PC-9 (cell line): ENCODE measurements at regions of chr5 and their contacts with region 1.

Region 1: GRCh38 chr5:72611118-72611730 is 104.0 kb upstream of the ZNF366 start:
- DNase-seq: peak in 1 of 2 experiments; percentile 56
- H3K4me3 ChIP-seq: no peak overlapping the region
- H3K27ac ChIP-seq: no peak overlapping the region
- H3K4me1 ChIP-seq: no peaks in the 10 kb centered on the region
- H3K27me3 ChIP-seq: no peaks in the 10 kb centered on the region
- CTCF ChIP-seq: peak; percentile 90

Region 2: DNA sequence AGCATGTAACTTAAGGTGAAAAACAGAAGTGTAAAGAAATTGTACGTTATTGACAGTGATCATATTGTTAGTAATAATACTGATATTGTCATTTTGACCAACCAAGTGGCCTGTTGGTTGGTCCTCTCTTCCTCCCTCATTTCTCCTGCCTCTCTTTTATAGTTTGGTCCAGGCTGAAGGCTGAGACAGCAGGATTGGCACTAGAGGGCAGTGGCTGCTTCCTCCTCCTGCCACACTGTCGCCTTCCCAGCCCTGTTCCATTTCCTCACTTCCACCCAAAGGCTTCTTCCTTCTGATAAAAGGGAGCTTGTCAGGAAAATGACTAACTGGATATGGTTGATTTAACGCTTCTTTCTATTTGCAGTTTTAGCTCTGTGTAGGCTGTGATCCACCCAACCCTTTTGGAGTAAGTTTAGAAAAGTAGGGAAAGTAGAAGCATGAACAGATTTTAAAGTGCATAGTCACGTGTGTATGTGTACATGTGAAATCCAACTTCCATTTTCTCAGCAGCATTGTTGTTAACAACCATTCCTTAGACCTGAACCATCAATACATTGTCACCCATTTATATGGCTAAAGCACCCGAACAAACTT is 255.4 kb before region 1 on chr5:
- CTCF ChIA-PET with region 1: no interaction called
- POLR2A ChIA-PET with region 1: no interaction called
- intact Hi-C with region 1: no loop called
- DNase-seq: no peak
- H3K4me3 ChIP-seq: no peak overlapping the region
- H3K27ac ChIP-seq: no peak overlapping the region
- H3K4me1 ChIP-seq: no peaks in the 10 kb centered on the region
- H3K27me3 ChIP-seq: no peaks in the 10 kb centered on the region
- CTCF ChIP-seq: peak; percentile 50

Region 3: DNA sequence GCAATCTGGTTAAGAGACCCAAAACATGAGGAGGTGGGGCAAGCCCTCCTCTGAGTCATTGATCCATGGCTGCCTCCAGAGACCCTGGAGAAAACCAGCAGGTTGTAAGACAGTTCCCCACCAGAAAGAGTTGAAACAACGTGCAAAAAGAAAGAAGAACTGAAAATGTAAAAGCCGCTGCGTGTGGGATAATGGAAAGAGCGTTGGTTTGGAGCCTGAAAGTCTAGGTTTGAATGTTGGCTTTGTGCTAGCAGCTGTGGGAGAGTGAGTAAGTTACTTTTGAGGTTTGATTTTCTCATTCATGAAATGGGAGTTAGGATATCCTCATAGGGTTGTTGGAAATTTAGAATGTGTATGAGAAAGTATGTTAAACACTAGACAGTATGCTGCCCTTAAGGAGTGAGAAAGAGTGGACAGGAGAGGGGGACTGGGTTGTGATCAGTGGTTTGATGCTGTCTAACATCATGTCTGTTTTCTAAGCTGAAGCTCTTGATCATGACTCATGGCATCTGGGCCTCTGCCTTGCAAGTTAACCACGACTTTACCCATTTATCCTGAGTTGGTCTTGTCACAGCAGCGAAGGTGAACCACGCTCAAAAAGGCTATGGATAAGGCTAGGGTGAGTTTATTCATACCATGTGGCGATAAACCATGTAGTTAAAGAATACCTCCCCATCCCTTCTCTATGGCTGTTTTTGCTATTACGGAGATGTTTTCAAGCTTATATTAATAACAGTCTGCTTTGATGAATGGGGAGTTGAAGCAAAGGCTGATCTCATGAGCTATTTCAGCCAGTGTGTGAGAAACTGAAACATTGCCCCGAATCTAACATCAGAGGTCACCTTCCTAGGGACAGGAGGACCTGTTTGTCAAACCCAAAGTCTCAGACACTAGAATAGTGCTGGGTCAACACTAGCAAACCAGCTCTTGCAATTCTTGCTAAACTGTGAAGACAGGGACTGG is 145.3 kb before region 1 on chr5:
- CTCF ChIA-PET with region 1: no interaction called
- POLR2A ChIA-PET with region 1: no interaction called
- intact Hi-C with region 1: no loop called
- DNase-seq: no peak
- H3K4me3 ChIP-seq: no peak overlapping the region
- H3K27ac ChIP-seq: peak overlapping the region; percentile 99
- H3K4me1 ChIP-seq: peaks cover 59% of the 10 kb centered on the region
- H3K27me3 ChIP-seq: no peaks in the 10 kb centered on the region
- CTCF ChIP-seq: no peak

Region 4: GRCh38 chr5:72597456-72597948 is 13.7 kb before region 1 on chr5:
- CTCF ChIA-PET with region 1: no interaction called
- POLR2A ChIA-PET with region 1: no interaction called
- intact Hi-C with region 1: no loop called
- DNase-seq: peak; percentile 41
- H3K4me3 ChIP-seq: no peak overlapping the region
- H3K27ac ChIP-seq: peak overlapping the region; percentile 96
- H3K4me1 ChIP-seq: peaks cover 47% of the 10 kb centered on the region
- H3K27me3 ChIP-seq: no peaks in the 10 kb centered on the region
- CTCF ChIP-seq: no peak

Region 5: DNA sequence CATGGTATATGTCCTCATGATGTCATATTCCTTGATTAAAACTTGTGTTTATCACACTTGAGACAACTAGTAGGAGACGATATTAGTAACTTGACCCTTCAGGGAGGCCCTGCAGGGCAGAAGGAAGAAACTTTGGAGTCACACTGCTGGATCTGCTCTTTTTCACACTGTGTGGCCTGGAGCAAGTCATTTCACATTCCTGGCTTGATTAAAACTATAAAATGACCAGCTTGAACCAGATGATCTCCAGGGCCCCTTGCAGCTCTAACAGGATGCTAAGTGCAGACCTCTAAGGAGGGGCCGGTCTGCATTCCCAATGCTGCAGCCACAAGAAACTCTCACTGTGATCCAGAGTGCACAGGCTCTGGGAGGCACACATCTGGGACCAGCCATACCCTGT is 42.4 kb after region 1 on chr5:
- CTCF ChIA-PET with region 1: no interaction called
- POLR2A ChIA-PET with region 1: interaction called, 15 read pairs
- intact Hi-C with region 1: loop called (anchors 2 kb)
- DNase-seq: peak; percentile 8 to 55
- H3K4me3 ChIP-seq: no peak overlapping the region
- H3K27ac ChIP-seq: no peak overlapping the region
- H3K4me1 ChIP-seq: peaks cover 26% of the 10 kb centered on the region
- H3K27me3 ChIP-seq: no peaks in the 10 kb centered on the region
- CTCF ChIP-seq: no peak

Region 6: DNA sequence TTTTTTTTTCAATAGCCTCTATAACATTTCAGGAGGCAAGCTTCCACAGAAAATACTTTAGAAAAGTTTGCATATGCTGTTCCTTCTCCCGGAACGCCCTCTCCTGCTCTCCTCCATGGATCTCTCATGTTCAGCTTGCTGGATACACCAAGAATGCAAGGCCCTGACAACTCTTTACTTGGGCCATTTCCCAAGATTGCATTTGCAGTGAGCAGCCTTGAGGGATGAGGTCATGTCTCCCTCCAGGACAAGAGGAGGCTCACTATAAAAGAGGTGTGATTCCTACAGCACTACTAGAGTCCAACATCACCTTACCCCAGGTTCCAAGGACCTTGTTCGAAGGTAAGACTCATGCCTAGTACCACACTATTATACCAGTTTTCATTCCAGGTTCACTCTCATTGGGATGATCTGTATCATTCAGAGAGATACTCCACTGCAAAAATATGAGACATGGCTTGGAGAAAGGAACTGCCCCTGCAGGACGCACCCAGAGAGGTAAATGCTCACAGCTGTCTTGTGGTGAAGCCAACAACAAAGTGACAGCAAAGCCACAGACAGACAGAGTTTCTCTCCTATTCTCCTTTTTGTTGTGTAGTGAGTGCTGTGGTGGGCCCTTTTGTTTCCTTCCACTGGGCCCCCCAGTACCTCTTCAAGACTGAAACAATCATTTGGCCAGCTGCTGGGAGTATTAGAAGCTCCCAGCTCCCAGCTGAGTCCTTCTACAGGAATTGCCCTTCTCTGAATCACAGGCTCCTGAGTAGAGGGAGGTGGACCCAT is 47.7 kb after region 1 on chr5:
- CTCF ChIA-PET with region 1: no interaction called
- POLR2A ChIA-PET with region 1: interaction called, 15 read pairs
- intact Hi-C with region 1: loop called (anchors 2 kb)
- DNase-seq: no peak
- H3K4me3 ChIP-seq: no peak overlapping the region
- H3K27ac ChIP-seq: no peak overlapping the region
- H3K4me1 ChIP-seq: peaks cover 19% of the 10 kb centered on the region
- H3K27me3 ChIP-seq: no peaks in the 10 kb centered on the region
- CTCF ChIP-seq: no peak

Region 7: GRCh38 chr5:72692231-72692637 is 81.0 kb after region 1 on chr5:
- CTCF ChIA-PET with region 1: no interaction called
- POLR2A ChIA-PET with region 1: no interaction called
- intact Hi-C with region 1: no loop called
- DNase-seq: no peak
- H3K4me3 ChIP-seq: no peak overlapping the region
- H3K27ac ChIP-seq: no peak overlapping the region
- H3K4me1 ChIP-seq: no peaks in the 10 kb centered on the region
- H3K27me3 ChIP-seq: no peaks in the 10 kb centered on the region
- CTCF ChIP-seq: no peak

Region 8: GRCh38 chr5:72723581-72723980 is 112.4 kb after region 1 on chr5:
- CTCF ChIA-PET with region 1: no interaction called
- POLR2A ChIA-PET with region 1: no interaction called
- intact Hi-C with region 1: loop called (anchors 5 kb)
- DNase-seq: peak; percentile 29 to 88
- H3K4me3 ChIP-seq: no peak overlapping the region
- H3K27ac ChIP-seq: peak overlapping the region; percentile 74
- H3K4me1 ChIP-seq: peaks cover 33% of the 10 kb centered on the region
- H3K27me3 ChIP-seq: no peaks in the 10 kb centered on the region
- CTCF ChIP-seq: no peak